Activated CD4-positive, alpha-beta memory T cell treated with anti-CD3 and anti-CD28 coated beads for 36 hours (primary cell): ENCODE measurements at regions of chr20 and their contacts with region 1.

Region 1: DNA sequence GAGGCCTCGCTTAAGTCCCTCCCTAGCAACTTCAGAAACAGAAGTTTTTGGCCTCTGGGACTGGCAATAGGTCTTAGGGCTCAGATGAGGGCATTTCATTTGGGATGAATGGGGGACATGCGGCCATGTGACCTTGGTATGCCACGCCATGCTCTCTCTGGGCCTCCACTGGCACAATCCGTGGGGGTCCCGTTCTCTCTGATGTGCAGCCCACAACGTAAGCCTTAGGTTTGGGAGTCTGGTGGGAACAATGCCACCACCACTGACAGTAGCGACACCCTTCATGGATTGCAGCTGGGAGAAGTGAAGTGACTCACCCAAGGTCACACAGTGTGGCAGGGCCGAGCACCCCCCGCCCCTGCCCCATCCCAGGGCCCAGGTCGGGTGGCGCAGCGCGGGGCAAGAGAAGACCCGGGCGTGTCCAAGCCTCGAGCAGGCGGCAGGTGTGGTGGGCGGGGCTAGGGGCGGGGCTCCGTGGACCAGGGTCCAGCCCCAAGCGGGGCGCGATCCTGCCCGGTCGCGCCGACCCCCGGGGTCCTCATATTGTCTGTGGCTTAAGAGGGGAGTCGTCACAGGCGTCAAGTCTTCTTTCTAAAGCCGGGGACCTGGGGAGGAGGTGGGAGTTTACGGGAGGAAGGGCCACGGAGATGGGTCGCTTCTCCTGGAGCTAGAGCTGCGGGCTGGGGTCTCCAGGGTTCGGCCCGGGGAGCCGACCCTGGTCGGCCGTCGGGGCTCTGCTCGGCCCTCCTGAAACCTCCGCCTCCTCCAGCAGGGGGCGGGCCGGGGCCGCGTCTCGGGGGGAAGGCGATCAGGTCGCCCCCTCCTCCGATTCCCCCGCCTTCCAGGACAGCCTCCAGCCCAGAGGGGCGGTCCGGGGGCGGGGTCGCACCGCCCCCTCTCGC is 698 bp upstream of the CEBPB start:
- DNase-seq: peak; percentile 90
- H3K4me3 Mint-ChIP-seq: peak overlapping the region; percentile 20
- H3K27ac Mint-ChIP-seq: no peak overlapping the region
- H3K4me1 Mint-ChIP-seq: peaks cover 23% of the 10 kb centered on the region
- H3K27me3 Mint-ChIP-seq: peaks cover 9% of the 10 kb centered on the region

Region 2: DNA sequence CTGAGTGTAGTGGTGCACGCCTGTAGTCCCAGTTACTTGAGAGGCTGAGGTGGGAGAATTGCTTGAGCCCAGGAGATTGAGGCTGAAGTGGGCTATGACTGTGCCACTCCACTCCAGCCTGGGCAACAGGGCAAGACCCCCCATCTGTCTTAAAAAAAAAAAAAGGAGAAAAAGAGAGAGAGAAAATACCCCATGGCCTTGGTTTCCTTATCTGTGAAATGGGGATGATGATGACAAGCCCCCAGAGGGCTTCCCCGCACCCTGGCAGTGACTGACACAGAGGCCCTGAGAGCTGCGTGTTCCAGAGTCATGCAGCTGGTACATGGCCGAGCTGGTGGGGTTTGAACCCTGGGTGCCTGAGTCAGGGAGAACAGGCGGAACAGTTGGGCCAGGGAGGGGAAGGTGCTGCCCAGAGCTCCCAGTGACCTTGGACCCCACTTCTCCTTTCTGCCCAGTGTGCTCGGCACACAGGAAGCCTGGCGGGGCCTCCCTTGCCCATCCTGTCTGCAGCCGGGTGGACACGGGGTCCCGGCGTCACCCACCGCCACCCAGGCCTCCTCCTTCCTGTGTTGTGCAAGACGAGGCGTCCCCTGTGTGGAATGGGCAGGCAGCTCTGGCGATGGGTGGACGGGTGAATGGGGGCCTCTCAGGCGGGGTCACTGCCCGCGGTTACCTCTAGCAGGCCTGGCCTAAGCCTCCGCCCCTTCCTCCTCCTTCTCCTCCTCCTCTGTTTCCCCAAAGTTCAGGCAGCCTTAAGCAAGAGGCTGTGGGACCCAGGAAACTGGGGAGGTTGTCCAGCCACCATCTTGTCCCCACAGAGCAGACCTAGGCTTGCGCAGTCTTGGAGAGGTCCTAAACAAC is 84.9 kb after region 1 on chr20:
- CTCF ChIA-PET with region 1: no interaction called
- POLR2A ChIA-PET with region 1: no interaction called
- intact Hi-C with region 1: no loop called
- DNase-seq: no peak
- H3K4me3 Mint-ChIP-seq: no peak overlapping the region
- H3K27ac Mint-ChIP-seq: no peak overlapping the region
- H3K4me1 Mint-ChIP-seq: peaks cover 2% of the 10 kb centered on the region
- H3K27me3 Mint-ChIP-seq: peaks cover 21% of the 10 kb centered on the region

Region 3: DNA sequence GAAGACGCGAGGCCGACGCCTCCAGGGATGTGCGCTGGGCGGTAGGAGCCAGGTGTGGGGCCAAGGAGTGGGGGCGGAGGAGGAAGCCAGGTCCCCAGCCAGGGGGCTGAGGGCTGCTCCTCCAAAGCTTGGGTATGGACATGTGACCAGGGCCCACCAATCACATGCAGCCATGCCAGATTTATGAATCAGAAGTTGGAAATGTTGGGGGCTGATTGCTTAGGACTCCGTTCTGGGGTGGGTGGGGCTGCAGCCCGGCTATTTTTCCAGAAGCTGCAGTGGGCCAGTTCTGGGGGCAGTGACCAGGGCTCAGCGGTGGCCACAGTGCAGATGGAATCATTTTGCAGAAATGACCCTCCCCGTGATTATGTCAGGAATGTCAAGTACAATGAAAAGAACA is 96.7 kb after region 1 on chr20:
- CTCF ChIA-PET with region 1: interaction called, 4 read pairs
- POLR2A ChIA-PET with region 1: interaction called, 3 read pairs
- intact Hi-C with region 1: loop called (anchors 5 kb)
- DNase-seq: peak; percentile 63
- H3K4me3 Mint-ChIP-seq: no peak overlapping the region
- H3K27ac Mint-ChIP-seq: peak overlapping the region; percentile 84
- H3K4me1 Mint-ChIP-seq: peaks cover 34% of the 10 kb centered on the region
- H3K27me3 Mint-ChIP-seq: peaks cover 5% of the 10 kb centered on the region

Region 4: DNA sequence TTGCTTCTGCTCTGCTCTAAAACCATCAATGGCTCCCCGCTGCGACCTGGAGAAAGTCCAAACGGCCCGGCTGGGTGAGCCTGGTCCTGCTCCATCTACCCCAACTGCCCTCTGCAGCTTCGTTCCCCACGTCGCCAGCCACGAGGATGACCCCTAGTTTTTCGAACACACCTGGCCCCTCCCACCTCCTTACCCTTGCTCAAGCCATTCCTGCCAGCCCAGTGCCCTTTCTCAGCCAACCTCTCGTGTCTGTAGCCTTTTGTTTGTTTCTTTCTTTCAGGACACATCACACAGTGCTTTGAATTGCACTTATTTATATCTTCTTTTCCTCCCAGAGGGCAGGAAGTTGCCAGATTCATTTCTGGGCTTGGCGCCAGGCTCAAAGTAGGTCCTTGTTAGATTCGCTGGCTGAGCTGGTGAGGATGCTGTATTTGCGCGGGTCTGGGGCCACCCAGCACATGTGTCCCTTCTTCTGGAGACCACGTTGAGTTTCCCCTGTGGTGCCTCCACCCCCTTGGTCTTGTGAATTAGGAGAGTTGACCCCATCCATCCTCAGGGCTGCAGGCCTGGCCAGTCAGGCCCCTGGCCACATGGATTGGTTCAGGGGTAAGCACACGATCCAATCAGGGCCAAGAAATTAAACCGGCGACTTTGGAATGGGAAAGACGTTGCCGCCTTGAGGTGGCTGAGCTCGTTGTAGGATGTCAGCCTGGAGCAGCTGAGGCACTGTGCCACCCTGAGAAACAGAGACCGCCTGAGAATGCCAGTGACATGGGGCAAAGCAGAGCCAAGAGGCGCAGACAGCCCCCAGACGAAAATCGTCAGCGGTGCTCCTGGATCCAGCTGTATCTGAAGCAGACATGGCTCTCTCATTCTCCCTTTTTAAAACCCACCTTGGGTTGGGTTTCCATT is 156.7 kb after region 1 on chr20:
- CTCF ChIA-PET with region 1: no interaction called
- POLR2A ChIA-PET with region 1: no interaction called
- intact Hi-C with region 1: loop called (anchors 1 kb)
- DNase-seq: peak; percentile 61
- H3K4me3 Mint-ChIP-seq: no peak overlapping the region
- H3K27ac Mint-ChIP-seq: peak overlapping the region; percentile 30
- H3K4me1 Mint-ChIP-seq: peaks cover 38% of the 10 kb centered on the region
- H3K27me3 Mint-ChIP-seq: no peaks in the 10 kb centered on the region

Region 5: GRCh38 chr20:50460460-50461267 is 270.7 kb after region 1 on chr20:
- CTCF ChIA-PET with region 1: interaction called, 153 read pairs
- POLR2A ChIA-PET with region 1: interaction called, 3 read pairs
- intact Hi-C with region 1: loop called (anchors 1 kb)
- DNase-seq: peak; percentile 90
- H3K4me3 Mint-ChIP-seq: no peak overlapping the region
- H3K27ac Mint-ChIP-seq: no peak overlapping the region
- H3K4me1 Mint-ChIP-seq: peaks cover 8% of the 10 kb centered on the region
- H3K27me3 Mint-ChIP-seq: peaks cover 12% of the 10 kb centered on the region

Region 6: DNA sequence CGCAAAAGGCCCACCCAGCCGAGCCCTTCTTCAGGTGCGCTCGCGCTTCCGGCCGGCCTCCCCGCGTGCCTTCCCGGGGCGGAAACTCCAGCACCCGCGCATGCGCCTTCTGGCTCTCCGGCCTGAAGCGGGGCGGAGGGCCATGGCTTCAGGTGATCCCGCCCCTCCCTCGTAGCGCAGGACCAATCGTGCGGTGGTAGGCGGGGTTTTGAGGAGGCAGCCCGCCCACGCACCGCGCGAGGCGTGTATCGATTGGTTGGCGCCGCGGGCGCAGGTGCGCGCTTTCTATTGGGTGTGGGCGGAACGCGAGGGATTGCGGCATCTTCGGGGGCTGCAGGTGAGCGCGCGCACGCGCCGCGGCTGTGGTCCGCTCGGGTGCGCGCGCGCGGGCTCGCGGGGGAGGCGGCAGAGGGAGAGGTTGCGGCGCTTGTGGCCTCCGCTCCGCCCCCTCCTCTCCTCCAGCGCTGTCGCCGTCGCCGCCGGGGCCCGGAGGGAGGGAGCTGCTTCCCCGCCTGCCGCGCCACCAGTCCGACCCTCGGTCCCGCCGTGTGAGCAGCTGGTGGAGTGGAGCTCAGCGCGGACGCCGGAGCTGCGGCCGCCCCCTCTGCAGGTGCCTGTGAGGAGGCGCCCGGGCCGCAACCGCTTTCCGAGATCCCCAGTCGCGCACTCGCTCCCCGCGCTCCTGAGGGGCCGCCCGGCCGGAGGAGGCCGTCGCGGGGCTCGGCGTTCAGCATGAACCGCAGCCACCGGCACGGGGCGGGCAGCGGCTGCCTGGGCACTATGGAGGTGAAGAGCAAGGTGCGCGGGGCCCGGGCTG is 541.3 kb after region 1 on chr20 and contains the start of gene PARD6B:
- CTCF ChIA-PET with region 1: no interaction called
- POLR2A ChIA-PET with region 1: no interaction called
- intact Hi-C with region 1: loop called (anchors 5 kb)
- DNase-seq: peak; percentile 100
- H3K4me3 Mint-ChIP-seq: peak within 1 kb of the TSS; percentile 87
- H3K27ac Mint-ChIP-seq: peak within 1 kb of the TSS; percentile 65
- H3K4me1 Mint-ChIP-seq: peaks cover 59% of the 10 kb centered on the region
- H3K27me3 Mint-ChIP-seq: no peaks in the 10 kb centered on the region
- total RNA-seq, gene PARD6B: 6.3 to 8.2 TPM